ENCODE measurements at regions of chr6 and their contacts with region 1.

Region 1: DNA sequence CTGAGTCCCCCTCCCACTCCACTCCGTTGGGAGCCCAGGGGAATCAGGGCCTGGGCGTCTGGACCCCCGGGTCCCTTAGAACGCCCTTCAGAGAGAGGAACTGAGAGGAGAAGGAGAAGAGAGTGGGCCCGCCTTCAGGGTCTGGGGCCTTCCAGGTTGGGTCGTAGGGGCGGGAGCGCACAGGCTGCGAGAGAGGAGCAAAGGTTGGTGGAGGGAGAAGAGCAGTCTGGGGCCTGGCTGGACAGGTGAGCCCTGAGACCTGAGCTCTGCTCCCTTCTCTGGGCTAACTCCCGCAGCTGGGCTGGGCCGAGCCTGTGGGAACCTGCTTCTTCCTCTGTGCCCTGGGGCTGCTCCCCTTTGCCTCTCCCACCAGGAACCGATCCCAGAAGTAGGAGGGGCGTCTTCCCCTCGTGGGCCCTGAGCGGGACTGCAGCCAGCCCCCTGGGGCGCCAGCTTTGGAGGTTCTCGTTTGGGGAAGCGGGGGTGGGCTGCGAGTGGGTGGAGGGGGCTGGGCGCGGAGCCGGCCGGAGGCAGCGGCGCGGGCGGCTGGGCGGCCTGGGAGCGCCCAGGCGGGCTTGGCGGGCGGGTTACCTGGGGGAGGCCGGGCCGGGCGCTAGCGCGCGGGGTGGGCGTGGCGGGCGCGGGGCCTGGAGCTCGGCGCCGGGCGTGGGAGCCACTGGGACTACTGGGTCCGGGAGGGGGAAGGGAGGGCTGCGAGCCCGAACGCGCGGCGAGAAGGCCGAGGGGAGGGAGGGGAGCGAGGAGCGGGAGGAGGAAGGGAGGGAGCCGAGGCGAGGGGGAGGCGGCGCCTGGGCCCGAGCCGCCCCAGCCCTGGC is at the start of gene DDR1:
- DNase-seq: peak; percentile 81 to 85
- H3K4me3 ChIP-seq: peak within 1 kb of the TSS; percentile 98
- H3K27ac ChIP-seq: peak within 1 kb of the TSS; percentile 94
- H3K4me1 ChIP-seq: peaks cover 44% of the 10 kb centered on the region
- H3K27me3 ChIP-seq: no peaks in the 10 kb centered on the region
- CTCF ChIP-seq: no peak
- total RNA-seq, gene DDR1: 267 and 269 TPM in 2 replicates

Region 2: GRCh38 chr6:30616811-30617564 is 266.9 kb before region 1 on chr6 and contains the start of gene PPP1R10:
- CTCF ChIA-PET with region 1: no interaction called
- POLR2A ChIA-PET with region 1: interaction called, 5 read pairs
- intact Hi-C with region 1: loop called (anchors 1 kb)
- DNase-seq: peak; percentile 98 to 99
- H3K4me3 ChIP-seq: peak within 1 kb of the TSS; percentile 87
- H3K27ac ChIP-seq: peak within 1 kb of the TSS; percentile 86
- H3K4me1 ChIP-seq: peaks cover 35% of the 10 kb centered on the region
- H3K27me3 ChIP-seq: no peaks in the 10 kb centered on the region
- CTCF ChIP-seq: no peak
- total RNA-seq, gene PPP1R10: 47.6 and 69.5 TPM in 2 replicates

Region 3: DNA sequence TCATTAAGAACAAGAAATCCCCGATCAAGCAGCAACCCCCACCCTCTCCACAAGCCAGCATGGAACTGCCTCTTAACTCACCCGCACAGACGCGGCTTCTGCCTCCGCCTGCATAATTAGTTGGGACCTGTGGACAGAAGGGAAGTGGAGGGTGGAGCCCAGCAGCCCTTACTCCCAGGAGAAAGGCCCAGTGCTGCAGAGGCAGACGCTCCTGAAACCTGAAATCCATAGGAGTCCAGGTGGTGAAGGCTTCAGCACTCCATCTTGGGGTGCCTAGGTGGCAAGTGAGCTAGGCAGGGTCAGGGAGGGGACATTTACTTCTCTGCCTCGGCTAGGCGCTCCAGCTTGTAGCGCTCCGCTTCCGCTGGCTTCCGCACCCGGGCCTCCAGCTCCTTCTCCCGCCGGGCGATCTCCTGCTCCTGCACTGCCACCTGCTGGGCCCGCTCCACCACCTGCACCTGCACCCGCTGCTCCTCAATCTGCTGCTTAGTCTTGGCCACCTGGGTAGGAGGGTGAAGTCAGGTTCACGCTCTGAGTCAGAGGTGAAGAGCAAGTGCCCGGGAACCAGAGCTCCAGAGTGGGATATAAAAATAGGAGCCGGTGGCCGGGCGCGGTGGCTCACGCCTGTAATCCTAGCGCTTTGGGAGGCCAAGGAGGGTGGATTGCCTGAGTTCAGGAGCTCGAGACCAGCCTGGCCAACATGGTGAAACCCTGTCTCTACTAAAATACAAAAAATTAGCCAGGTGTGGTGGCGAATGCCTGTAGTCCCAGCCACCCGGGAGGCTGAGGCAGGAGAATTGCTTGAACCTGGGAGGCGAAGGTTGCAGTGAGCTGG is 153.1 kb before region 1 on chr6:
- CTCF ChIA-PET with region 1: interaction called, 12 read pairs
- POLR2A ChIA-PET with region 1: interaction called, 24 read pairs
- intact Hi-C with region 1: no loop called
- DNase-seq: peak; percentile 89 to 92
- H3K4me3 ChIP-seq: no peak overlapping the region
- H3K27ac ChIP-seq: peak overlapping the region; percentile 18; the same call in 1 of the 2 replicates
- H3K4me1 ChIP-seq: peaks cover 16% of the 10 kb centered on the region
- H3K27me3 ChIP-seq: no peaks in the 10 kb centered on the region
- CTCF ChIP-seq: peak; percentile 80

Region 4: GRCh38 chr6:30834643-30835042 is 49.3 kb before region 1 on chr6:
- CTCF ChIA-PET with region 1: interaction called, 8 read pairs
- POLR2A ChIA-PET with region 1: interaction called, 10 read pairs
- intact Hi-C with region 1: no loop called
- DNase-seq: no peak
- H3K4me3 ChIP-seq: no peak overlapping the region
- H3K27ac ChIP-seq: no peak overlapping the region
- H3K4me1 ChIP-seq: peaks cover 13% of the 10 kb centered on the region
- H3K27me3 ChIP-seq: no peaks in the 10 kb centered on the region
- CTCF ChIP-seq: no peak

Region 5: DNA sequence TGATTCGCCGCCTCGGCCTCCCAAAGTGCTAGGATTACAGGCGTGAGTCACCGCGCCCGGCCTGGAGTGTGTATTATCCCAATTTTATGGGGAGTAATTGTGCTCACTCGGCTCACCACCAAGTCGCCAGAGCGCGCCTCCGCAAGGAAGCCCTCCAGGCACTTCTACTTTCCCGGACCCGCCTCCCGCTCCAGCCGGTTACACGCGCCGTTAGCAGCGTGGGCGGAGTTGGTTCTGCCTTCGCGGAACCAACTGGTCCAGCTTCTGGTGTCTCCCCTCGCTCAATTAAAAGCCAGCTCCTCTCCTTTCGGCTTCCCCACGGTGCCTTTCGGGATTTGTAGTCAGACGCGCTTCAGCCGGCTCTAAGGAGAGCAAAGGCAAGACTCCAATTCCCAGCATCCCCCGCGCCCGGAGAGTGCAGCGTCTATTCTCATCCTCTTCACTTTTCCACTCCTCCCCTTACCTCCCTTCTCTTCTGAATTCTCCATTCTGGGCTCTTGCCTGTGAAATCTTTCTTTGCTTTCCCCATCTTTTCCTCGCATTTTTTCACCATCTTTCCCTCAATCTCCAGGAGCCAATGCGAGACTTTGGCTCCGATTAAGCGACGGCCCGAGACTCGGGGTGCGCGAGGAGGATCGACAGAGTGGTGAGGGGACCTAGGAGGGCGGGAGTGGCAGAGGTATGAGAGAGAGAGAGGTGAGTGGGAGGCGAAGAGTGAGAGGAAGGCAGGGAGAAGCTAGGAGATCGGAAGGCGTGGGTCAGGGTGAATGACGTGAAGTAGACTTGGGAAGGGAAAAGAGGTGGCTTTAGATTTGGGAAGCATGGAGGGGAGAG is 24.1 kb after region 1 on chr6 and contains the start of gene GTF2H4:
- CTCF ChIA-PET with region 1: interaction called, 4 read pairs
- POLR2A ChIA-PET with region 1: interaction called, 10 read pairs
- intact Hi-C with region 1: no loop called
- DNase-seq: peak; percentile 97 to 98
- H3K4me3 ChIP-seq: peak within 1 kb of the TSS; percentile 100
- H3K27ac ChIP-seq: peak within 1 kb of the TSS; percentile 43
- H3K4me1 ChIP-seq: peaks cover 7% of the 10 kb centered on the region
- H3K27me3 ChIP-seq: no peaks in the 10 kb centered on the region
- CTCF ChIP-seq: no peak
- total RNA-seq, gene GTF2H4: 31.3 and 43.9 TPM in 2 replicates

Region 6: GRCh38 chr6:31559958-31560696 is 676.2 kb after region 1 on chr6:
- CTCF ChIA-PET with region 1: no interaction called
- POLR2A ChIA-PET with region 1: interaction called, 14 read pairs
- intact Hi-C with region 1: no loop called
- DNase-seq: peak; percentile 60 to 83
- H3K4me3 ChIP-seq: no peak overlapping the region
- H3K27ac ChIP-seq: peak overlapping the region; percentile 33; the same call in 1 of the 2 replicates
- H3K4me1 ChIP-seq: peaks cover 15% of the 10 kb centered on the region
- H3K27me3 ChIP-seq: no peaks in the 10 kb centered on the region
- CTCF ChIP-seq: no peak

Measured in PC-9 (cell line).